ENCODE measurements at regions of chr22 and their contacts with region 1.

Region 1: DNA sequence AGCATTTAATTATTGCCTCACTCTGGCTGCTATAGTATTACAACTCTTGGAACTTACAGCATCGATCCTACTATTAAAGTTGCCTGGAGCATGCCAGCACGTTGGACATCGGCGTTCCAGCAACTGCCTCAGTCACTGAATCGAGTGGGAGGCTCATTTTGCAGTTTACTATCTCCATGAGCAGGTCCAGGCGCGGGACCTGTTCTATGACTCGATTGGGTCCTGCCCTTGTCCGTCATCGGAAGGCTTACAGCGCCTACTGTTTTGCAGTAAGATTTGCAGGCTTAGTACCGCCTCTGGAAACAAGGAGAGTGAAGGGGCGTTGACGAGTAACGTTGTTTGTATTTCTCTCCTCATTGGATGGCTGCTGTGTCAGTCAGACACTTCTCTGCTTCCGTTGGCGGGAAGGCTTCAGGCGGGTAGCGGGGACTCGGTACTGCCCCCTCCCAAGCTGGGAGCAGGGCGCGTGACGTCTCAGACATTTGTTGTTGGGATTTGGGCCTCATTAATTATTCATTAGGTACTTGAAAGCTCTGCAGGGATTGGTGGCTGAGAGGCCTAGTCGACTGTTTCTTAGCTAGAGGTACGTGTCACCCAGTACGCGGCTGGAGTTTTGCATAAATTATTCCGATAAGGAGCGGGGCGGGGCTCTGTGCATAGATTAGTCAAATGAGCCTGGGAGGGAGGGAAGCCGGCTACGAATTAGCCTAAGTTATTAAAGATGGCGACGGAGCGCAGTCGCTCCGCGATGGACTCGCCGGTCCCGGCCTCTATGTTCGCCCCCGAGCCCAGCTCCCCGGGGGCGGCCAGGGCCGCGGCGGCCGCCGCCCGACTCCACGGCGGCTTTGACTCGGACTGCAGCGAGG is at the start of gene GTPBP1:
- DNase-seq: peak; percentile 99
- H3K4me3 Mint-ChIP-seq: peak within 1 kb of the TSS; percentile 86
- H3K27ac Mint-ChIP-seq: peak within 1 kb of the TSS; percentile 92
- H3K4me1 Mint-ChIP-seq: peaks cover 47% of the 10 kb centered on the region
- H3K27me3 Mint-ChIP-seq: no peaks in the 10 kb centered on the region
- total RNA-seq, gene GTPBP1: 98.9 to 107 TPM

Region 2: DNA sequence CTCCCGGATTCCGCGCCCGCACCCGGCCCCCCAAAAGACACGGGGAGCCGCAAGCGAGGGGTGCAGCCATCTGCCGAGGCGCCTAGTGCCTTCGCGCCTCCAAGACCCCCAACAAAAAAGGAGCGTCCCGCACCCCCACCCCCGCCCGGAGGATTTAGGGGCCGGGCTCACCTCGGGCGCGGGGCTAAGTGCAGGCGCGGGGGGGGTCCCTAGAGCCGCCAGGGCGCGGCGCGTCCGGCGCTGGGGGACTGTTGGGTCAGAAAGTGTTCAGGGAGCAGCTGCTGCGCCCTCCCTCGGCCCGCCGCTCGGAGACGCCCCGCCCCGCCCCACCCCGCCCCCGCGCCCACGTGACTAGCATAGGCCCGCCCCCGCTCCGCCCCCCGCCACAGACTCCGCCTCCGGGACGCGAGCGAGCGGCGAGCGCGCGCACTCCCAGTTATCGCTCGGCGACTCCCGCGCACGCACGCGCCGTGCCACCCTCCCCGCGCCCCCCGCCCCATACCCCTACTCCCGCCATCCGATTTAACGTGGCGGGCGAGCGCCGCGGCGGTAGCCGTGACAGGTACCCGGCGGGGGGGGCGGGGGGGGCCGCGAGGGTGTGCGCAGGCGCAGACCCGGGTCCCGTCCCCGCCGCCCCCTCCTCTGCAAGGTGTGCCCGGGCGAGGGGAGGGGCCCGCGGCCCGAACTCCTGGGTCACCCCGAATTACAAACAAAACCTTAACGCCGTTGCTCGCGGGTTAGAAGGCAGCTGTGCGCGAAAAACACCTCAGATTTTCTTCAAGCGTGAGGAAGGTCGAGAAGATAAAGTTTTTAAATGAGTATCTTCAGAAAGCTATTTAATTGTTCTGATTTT is 306.6 kb before region 1 on chr22:
- CTCF ChIA-PET with region 1: no interaction called
- intact Hi-C with region 1: loop called (anchors 10 kb)
- DNase-seq: peak; percentile 84
- H3K4me3 Mint-ChIP-seq: peak overlapping the region; percentile 72
- H3K27ac Mint-ChIP-seq: peak overlapping the region; percentile 50
- H3K4me1 Mint-ChIP-seq: peaks cover 25% of the 10 kb centered on the region
- H3K27me3 Mint-ChIP-seq: no peaks in the 10 kb centered on the region

Region 3: DNA sequence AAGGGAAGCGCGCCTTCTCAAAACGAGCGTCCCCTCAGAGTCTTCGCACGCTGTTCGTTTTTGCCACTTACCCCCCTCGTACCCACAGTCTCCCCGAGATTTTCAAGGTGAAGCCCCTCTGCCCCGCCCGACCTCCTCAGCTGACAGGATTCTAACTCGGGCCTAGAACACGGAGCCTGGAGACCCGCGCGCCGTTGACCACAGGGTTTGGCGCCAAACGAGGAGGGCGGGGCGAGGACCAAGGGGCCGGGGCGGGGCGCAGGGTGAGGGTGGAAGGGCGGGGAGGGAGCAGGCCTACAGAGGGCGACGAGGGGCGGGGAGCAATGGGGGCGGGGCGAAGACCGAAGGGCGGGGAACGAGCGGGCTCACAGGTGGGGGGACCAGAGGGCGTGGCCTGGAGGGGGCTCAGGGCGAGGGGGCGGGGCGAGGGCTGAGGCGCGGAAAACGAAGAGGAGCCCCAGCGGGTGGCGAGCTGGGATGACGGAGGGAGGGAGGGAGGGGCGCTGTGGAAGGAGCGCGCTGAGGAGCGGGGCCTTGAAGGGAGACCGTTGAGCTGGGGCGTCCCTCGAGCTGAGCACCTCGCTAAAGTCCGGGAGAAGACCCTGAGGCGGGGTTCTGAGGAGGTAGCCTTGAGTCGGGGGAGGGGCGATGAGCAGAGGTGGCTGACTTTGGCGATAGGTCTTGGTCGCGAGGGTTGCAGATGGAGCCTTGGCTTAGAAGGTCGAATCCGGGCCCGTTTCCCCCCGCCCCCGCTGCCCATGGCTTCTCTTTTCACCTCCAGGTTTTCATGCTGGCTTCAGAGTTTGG is 135.3 kb before region 1 on chr22 and contains the start of gene DMC1:
- CTCF ChIA-PET with region 1: no interaction called
- intact Hi-C with region 1: loop called (anchors 1 kb)
- DNase-seq: peak; percentile 99
- H3K4me3 Mint-ChIP-seq: peak within 1 kb of the TSS; percentile 81
- H3K27ac Mint-ChIP-seq: peak within 1 kb of the TSS; percentile 95
- H3K4me1 Mint-ChIP-seq: peaks cover 11% of the 10 kb centered on the region
- H3K27me3 Mint-ChIP-seq: no peaks in the 10 kb centered on the region
- total RNA-seq, gene DMC1: 13.0 to 16.3 TPM

Region 4: DNA sequence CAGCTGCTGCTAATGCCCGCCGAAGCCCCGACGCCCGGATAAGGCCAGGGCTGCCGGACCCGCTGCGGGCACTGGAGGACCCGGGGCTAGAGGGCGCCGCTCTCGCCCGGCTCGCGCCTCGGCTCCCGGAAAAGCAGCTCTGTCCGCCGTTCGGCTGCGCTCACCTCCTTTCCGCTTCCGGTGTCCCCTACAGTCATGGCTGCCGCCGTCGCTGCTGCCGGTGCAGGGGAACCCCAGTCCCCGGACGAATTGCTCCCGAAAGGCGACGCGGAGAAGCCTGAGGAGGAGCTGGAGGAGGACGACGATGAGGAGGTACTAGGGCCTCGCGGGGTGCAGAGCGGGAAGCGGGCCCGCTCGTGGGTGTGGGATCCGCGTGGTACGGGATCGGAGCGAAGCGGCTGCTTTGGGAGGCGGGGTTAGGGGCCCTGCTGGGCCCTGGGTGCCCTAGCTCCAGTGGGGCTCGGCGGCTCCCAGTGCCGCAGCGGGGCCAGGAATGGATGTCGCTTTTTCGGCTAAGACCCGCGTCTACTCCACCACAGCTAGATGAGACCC is 23.6 kb before region 1 on chr22 and contains the start of gene TOMM22:
- CTCF ChIA-PET with region 1: interaction called, 3 read pairs
- intact Hi-C with region 1: loop called (anchors 1 kb)
- DNase-seq: peak; percentile 89
- H3K4me3 Mint-ChIP-seq: peak within 1 kb of the TSS; percentile 91
- H3K27ac Mint-ChIP-seq: peak within 1 kb of the TSS; percentile 93
- H3K4me1 Mint-ChIP-seq: peaks cover 21% of the 10 kb centered on the region
- H3K27me3 Mint-ChIP-seq: no peaks in the 10 kb centered on the region
- total RNA-seq, gene TOMM22: 151 to 154 TPM

Region 5: GRCh38 chr22:38793721-38794466 is 88.4 kb after region 1 on chr22 and contains the start of gene DNAL4:
- CTCF ChIA-PET with region 1: no interaction called
- intact Hi-C with region 1: loop called (anchors 1 kb)
- DNase-seq: peak; percentile 97
- H3K4me3 Mint-ChIP-seq: peak within 1 kb of the TSS; percentile 76
- H3K27ac Mint-ChIP-seq: peak within 1 kb of the TSS; percentile 46
- H3K4me1 Mint-ChIP-seq: peaks cover 18% of the 10 kb centered on the region
- H3K27me3 Mint-ChIP-seq: no peaks in the 10 kb centered on the region
- total RNA-seq, gene DNAL4: 5.9 to 8.0 TPM

Region 6: DNA sequence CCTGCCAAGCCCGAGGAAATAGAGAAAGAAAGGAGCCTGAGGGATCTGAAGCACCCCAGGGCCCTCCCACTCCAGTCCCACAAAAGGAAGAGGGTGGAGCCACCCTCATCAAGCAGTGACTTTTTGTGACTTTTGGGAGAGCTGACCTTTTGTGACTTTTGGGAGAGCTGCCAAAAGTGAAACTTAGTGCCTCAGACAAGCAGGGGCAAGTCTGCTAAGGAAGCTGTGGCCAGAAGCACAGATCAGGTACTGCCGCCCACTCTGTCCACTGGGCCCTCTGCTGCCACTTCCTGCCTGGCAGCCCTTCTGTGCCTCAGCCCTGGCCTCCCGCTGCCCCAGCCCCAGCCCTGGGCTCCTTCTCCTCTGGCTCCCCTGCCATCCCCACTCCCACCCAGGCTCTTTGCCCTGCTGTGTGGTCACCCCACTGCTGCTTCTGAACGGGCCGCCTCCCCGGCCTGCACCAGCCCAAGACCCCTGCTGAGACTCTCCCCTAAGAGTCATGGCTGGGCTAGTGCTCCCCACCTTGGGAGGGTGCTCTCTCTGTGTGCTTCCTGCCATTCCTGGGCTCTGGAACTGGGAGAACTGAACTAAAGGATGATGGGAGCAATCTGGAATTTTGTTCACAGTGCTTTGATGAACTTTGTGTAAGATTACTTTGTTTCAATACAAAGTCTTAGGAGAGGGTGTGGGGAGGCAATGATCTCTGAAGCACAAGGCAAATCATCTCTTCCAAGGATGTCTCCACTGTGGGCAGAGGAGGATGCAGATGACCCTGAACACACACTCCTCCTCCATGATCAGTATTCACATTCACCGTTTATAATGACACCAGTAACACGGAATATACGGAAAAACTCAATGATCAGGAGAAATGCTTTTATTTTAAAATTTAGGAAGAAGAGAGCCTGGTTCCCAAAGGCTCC is 391.9 kb after region 1 on chr22 and contains the start of gene APOBEC3H:
- CTCF ChIA-PET with region 1: no interaction called
- intact Hi-C with region 1: loop called (anchors 5 kb)
- DNase-seq: peak; percentile 71
- H3K4me3 Mint-ChIP-seq: peak within 1 kb of the TSS; percentile 67
- H3K27ac Mint-ChIP-seq: peak within 1 kb of the TSS; percentile 84
- H3K4me1 Mint-ChIP-seq: peaks cover 74% of the 10 kb centered on the region
- H3K27me3 Mint-ChIP-seq: no peaks in the 10 kb centered on the region
- total RNA-seq, gene APOBEC3H: 11.9 to 13.2 TPM

Region 7: DNA sequence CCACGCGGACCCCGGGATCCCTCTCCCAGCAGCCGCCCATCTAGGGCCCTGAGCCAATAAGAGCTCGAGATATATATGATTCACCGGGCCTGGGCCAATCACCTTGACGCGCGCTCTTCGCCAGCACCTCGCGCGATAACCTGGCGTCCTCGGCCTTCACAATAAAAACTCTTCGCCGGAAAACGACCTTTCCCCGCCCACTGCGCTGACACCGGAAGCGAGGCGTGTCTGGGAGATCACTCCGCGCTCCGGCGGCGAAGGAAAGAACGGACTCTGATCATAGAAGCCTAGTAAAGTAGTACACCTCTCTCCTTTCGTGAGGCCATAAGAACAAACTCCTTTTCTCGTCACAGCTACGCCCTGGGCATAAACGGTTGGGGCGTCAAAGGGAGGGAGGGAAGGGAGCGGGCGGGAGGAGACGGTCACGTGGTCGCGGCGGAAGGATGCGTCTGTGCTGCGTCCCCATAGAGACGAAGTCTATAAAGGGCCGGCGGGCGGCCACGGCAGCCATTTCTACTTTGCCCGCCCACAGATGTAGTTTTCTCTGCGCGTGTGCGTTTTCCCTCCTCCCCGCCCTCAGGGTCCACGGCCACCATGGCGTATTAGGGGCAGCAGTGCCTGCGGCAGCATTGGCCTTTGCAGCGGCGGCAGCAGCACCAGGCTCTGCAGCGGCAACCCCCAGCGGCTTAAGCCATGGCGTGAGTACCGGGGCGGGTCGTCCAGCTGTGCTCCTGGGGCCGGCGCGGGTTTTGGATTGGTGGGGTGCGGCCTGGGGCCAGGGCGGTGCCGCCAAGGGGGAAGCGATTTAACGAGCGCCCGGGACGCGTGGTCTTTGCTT is 814.8 kb after region 1 on chr22 and contains the start of gene ATF4:
- CTCF ChIA-PET with region 1: no interaction called
- intact Hi-C with region 1: loop called (anchors 1 kb)
- DNase-seq: peak; percentile 98
- H3K4me3 Mint-ChIP-seq: peak within 1 kb of the TSS; percentile 83
- H3K27ac Mint-ChIP-seq: peak within 1 kb of the TSS; percentile 95
- H3K4me1 Mint-ChIP-seq: peaks cover 64% of the 10 kb centered on the region
- H3K27me3 Mint-ChIP-seq: peaks cover 2% of the 10 kb centered on the region
- total RNA-seq, gene ATF4: 589 to 609 TPM